ENCODE measurements at regions of chr7 and their contacts with region 1.

Region 1: GRCh38 chr7:149598721-149599306 is 101.2 kb upstream of the ZNF746 start:
- DNase-seq: no peak
- ATAC-seq: peak; percentile 62
- H3K4me3 ChIP-seq: peak overlapping the region; percentile 60; the same call in 1 of the 2 replicates
- H3K27ac ChIP-seq: peak overlapping the region; percentile 93
- H3K4me1 ChIP-seq: peaks cover 21% of the 10 kb centered on the region
- H3K27me3 ChIP-seq: no peaks in the 10 kb centered on the region
- CTCF ChIP-seq: peak; percentile 49 to 64 (median 56)
- EP300 ChIP-seq: no peak
- POLR2A ChIP-seq: no peak
- RAD21 ChIP-seq: peak; percentile 85

Region 2: DNA sequence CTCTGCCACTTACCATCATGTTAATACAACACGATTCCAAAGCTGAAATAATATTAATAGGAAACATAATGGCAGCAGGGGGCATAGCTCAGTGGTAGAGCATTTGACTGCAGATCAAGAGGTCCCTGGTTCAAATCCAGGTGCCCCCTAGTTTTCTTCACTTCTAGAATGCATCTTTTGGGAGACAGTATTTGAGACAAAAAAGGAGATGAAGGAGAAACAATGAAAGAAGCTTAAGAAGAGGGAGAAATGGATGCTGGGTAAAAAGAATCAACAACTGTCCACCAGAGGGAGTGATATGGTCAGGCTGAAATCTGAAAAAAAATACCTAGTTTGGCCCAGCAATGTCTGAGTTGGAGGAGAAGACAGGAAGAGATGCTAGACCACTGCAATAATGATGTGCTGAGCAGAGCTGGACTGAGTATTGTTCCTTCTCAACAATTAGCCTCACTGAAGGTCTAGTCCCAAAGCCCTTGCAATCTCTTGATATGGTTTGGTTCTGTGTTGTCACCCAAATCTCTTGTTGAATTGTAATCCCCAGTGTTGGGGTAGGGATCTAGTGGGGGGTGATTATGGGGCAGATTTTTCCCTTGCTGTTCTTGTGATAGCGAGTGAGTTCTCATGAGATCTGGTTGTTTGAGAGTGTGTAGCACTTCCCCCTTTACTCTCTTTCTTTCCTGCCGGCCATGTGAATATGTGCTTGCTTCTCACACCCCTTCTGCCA is 288.5 kb before region 1 on chr7:
- CTCF ChIA-PET with region 1: interaction called, 10 read pairs
- POLR2A ChIA-PET with region 1: no interaction called
- RAD21 ChIA-PET with region 1: no interaction called
- SMC1A ChIA-PET with region 1: interaction called, 6 read pairs
- in situ Hi-C with region 1: no loop called
- intact Hi-C with region 1: loop called (anchors 1 kb)
- DNase-seq: peak; percentile 36
- ATAC-seq: peak; percentile 86
- H3K4me3 ChIP-seq: no peak overlapping the region
- H3K27ac ChIP-seq: no peak overlapping the region
- H3K4me1 ChIP-seq: no peaks in the 10 kb centered on the region
- H3K27me3 ChIP-seq: no peaks in the 10 kb centered on the region
- CTCF ChIP-seq: peak; percentile 40 to 58 (median 42); a peak in 5 of 6 replicates
- EP300 ChIP-seq: no peak
- POLR2A ChIP-seq: no peak
- RAD21 ChIP-seq: peak; percentile 52

Region 3: DNA sequence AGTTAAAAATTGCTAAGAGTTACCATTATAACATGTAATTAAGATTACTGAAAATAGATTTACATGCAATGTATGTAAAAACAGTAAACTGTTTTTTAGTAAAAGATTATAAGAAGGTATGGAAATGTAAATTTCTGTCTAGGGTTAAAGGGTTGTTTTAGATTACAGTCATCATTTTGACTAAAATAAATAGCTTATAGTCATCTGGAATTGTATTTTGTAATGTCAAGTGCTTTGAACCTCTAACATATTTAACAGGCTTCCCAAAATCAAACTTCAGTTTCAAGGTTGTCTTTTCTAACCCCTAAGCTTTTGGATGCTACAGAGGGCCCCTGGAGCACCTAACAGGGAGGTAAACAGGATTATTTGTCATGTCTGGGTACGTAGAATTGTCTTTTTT is 66.2 kb before region 1 on chr7:
- CTCF ChIA-PET with region 1: interaction called, 5 read pairs
- POLR2A ChIA-PET with region 1: interaction called, 5 read pairs
- RAD21 ChIA-PET with region 1: interaction called, 7 read pairs
- SMC1A ChIA-PET with region 1: interaction called, 13 read pairs
- in situ Hi-C with region 1: no loop called
- intact Hi-C with region 1: no loop called
- DNase-seq: no peak
- ATAC-seq: no peak
- H3K4me3 ChIP-seq: no peak overlapping the region
- H3K27ac ChIP-seq: no peak overlapping the region
- H3K4me1 ChIP-seq: peaks cover 6% of the 10 kb centered on the region; the same call in 1 of the 2 replicates
- H3K27me3 ChIP-seq: no peaks in the 10 kb centered on the region
- CTCF ChIP-seq: no peak
- EP300 ChIP-seq: no peak
- POLR2A ChIP-seq: no peak
- RAD21 ChIP-seq: no peak

Region 4: GRCh38 chr7:149624419-149625339 is 25.9 kb after region 1 on chr7:
- CTCF ChIA-PET with region 1: interaction called, 13 read pairs
- POLR2A ChIA-PET with region 1: interaction called, 4 read pairs
- RAD21 ChIA-PET with region 1: interaction called, 3 read pairs
- SMC1A ChIA-PET with region 1: interaction called, 17 read pairs
- in situ Hi-C with region 1: no loop called
- intact Hi-C with region 1: loop called (anchors 1 kb)
- DNase-seq: peak; percentile 50
- ATAC-seq: peak; percentile 92
- H3K4me3 ChIP-seq: peak overlapping the region; percentile 99
- H3K27ac ChIP-seq: peak overlapping the region; percentile 74
- H3K4me1 ChIP-seq: peaks cover 24% of the 10 kb centered on the region
- H3K27me3 ChIP-seq: peaks cover 0 to 3% of the 10 kb centered on the region in 2 experiments; a peak in 2 of 4 replicates
- CTCF ChIP-seq: peak; percentile 78 to 88 (median 84)
- EP300 ChIP-seq: no peak
- POLR2A ChIP-seq: peak; percentile 97
- RAD21 ChIP-seq: peak; percentile 44